Heart right ventricle (tissue), 16 donors: ENCODE measurements at regions of chr13 and their contacts with region 1.

Region 1: DNA sequence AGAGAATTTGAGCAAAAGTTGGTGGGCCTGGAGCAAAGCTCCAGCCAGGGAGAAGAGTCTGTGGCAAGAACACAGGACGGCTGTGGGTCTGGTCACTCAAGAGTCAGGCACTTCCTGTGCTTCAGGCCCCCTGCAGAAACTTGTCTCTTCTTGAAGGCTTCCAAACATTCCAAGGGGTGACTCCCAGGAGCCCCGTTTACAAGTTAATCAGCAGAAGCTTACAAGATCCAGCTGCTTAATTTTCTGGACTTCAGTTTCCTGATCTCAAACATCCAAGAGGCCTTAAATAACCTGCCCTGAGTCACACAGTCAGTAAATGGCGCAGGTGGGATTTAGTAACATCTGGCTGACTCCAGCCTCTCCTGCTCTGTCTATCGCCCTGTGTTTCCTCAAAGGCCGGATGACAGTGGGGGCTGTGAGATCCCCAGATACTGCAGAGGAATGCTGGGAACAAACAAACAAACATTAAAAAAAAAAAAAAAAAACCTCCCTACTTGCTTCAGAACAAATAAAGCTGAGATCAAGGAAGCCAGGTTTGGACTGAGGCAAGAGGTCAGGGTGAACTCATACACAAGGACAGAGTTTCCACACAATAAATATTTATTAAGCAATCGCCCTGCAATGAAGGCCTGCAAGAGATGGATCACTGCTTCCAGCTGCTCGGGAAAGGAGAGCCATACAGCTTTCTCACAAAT is 175.4 kb upstream of the RFC3 start:
- DNase-seq: peak in 1 of 2 donors; percentile 56
- ATAC-seq: peak; percentile 72 to 82 (median 78)
- H3K4me3 ChIP-seq: no peak overlapping the region
- H3K27ac ChIP-seq: peak overlapping the region in 9 of 10 donors; percentile 40 to 76 (median 63)
- H3K4me1 ChIP-seq: peaks cover 5 to 61% (median 46%) of the 10 kb centered on the region in 9 donors
- H3K27me3 ChIP-seq: no peaks in the 10 kb centered on the region
- CTCF ChIP-seq: no peak

Region 2: GRCh38 chr13:33678906-33679657 is 36.6 kb after region 1 on chr13:
- intact Hi-C with region 1: loop called in 2 of 10 experiments (anchors 2 to 5 kb)
- DNase-seq: peak; percentile 36 to 75
- ATAC-seq: peak; percentile 53 to 81 (median 72)
- H3K4me3 ChIP-seq: peak overlapping the region in 5 of 10 donors; percentile 1 to 22 (median 10)
- H3K27ac ChIP-seq: peak overlapping the region in 9 of 10 donors; percentile 34 to 73 (median 61)
- H3K4me1 ChIP-seq: peaks cover 0 to 41% (median 30%) of the 10 kb centered on the region in 9 donors
- H3K27me3 ChIP-seq: no peaks in the 10 kb centered on the region
- CTCF ChIP-seq: no peak